Psoas muscle (tissue), 8 donors: ENCODE measurements at regions of chr5 and their contacts with region 1.

Region 1: GRCh38 chr5:11273180-11273903 is 512.3 kb upstream of the DAP start:
- DNase-seq: no peak
- ATAC-seq: no peak
- H3K4me3 ChIP-seq: no peak overlapping the region
- H3K27ac ChIP-seq: no peak overlapping the region
- H3K4me1 ChIP-seq: no peaks in the 10 kb centered on the region
- H3K27me3 ChIP-seq: no peaks in the 10 kb centered on the region
- CTCF ChIP-seq: no peak

Region 2: GRCh38 chr5:11082404-11082945 is 190.9 kb before region 1 on chr5:
- intact Hi-C with region 1: no loop called
- DNase-seq: no peak
- ATAC-seq: no peak
- H3K4me3 ChIP-seq: no peak overlapping the region
- H3K27ac ChIP-seq: no peak overlapping the region
- H3K4me1 ChIP-seq: no peaks in the 10 kb centered on the region
- H3K27me3 ChIP-seq: peaks cover 0 to 3% (median 3%) of the 10 kb centered on the region in 3 donors
- CTCF ChIP-seq: no peak

Region 3: GRCh38 chr5:11311272-11311671 is 37.9 kb after region 1 on chr5:
- intact Hi-C with region 1: no loop called
- DNase-seq: no peak
- ATAC-seq: no peak
- H3K4me3 ChIP-seq: no peak overlapping the region
- H3K27ac ChIP-seq: no peak overlapping the region
- H3K4me1 ChIP-seq: no peaks in the 10 kb centered on the region
- H3K27me3 ChIP-seq: no peaks in the 10 kb centered on the region
- CTCF ChIP-seq: no peak

Region 4: GRCh38 chr5:11494340-11494739 is 221.0 kb after region 1 on chr5:
- intact Hi-C with region 1: loop called in 1 of 2 experiments (anchors 10 kb)
- DNase-seq: no peak
- ATAC-seq: no peak
- H3K4me3 ChIP-seq: no peak overlapping the region
- H3K27ac ChIP-seq: no peak overlapping the region
- H3K4me1 ChIP-seq: no peaks in the 10 kb centered on the region
- H3K27me3 ChIP-seq: no peaks in the 10 kb centered on the region
- CTCF ChIP-seq: no peak

Region 5: GRCh38 chr5:11619339-11620024 is 346.1 kb after region 1 on chr5:
- intact Hi-C with region 1: loop called (anchors 5 to 10 kb)
- DNase-seq: no peak
- ATAC-seq: no peak
- H3K4me3 ChIP-seq: no peak overlapping the region
- H3K27ac ChIP-seq: no peak overlapping the region
- H3K4me1 ChIP-seq: no peaks in the 10 kb centered on the region
- H3K27me3 ChIP-seq: no peaks in the 10 kb centered on the region
- CTCF ChIP-seq: no peak